ENCODE measurements at regions of chr15 and their contacts with region 1.

Region 1: DNA sequence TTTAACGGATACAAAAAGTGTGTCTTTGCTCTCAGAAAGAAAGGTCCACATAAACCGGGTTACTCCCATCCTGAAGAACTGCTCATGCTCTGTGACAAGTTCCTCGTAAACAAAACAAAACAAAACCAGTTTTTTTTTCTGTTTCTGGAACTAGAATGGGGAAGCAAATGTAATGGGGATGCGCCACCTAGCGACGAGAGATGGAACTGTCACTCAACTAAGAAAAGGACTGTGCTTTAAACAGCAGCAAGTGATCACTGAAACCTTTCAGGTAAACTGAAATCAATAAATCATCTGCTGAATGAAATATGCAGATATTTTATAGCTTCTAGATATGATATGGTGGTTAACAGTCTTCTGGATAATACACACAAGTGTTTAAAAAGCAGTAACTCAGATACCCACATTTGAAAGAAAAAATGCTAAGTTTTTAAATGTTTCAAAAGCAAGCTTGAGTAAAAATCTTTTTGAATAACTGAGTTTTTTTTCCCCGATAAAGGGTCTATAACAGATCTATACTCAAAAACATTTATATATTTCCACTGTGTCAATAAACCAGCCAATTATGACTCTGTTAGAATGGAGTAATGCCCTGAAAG is 10.9 kb downstream of the TM2D3 start:
- DNase-seq: peak; percentile 82
- H3K4me3 ChIP-seq: no peak overlapping the region
- H3K27ac ChIP-seq: peak overlapping the region; percentile 93
- H3K4me1 ChIP-seq: peaks cover 23% of the 10 kb centered on the region
- H3K27me3 ChIP-seq: no peaks in the 10 kb centered on the region
- CTCF ChIP-seq: peak; percentile 81 to 82
- POLR2A ChIP-seq: no peak

Region 2: DNA sequence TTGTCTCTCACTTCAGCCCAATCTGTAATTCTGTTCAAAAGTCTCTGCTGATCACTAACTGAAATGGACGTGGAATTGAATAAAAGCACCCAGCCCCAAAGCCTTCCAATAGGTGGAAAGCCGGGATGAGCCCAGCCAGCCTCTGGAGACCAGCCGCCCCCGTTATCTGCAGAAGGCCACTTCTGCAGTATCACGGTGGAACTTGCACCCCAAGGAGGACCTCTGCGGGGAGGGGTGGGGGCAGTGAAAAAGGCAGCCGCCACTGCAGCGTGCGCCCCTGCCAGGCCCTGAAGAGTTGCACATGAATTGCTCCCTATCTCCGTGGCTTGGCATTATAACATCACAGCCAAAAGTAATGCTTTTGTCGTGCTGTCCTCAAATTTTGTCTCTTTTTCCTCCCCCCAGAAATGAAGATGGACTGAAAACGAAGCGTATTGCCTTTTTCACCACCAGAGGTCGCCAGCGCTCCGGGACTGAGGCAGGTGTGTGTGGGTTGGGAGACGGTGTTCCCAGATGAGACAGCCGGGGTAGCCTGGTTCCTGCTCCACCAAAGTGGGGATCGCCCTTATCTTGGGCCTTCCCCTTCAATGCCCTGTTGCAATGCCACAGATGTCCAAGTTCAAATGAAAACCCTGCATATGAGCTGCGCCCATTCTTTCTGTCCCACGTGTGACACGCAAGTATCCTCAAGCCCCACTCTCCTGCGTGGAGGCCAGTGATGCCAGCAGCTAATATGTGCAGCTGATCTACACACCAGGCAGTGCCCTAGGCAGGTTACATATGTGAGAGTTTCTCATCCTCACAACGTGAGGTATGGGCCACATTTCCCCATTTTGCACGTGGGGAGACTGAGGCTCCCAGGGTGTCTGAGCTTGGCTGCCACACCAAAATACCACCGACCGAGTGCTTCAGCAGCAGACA is 626.1 kb before region 1 on chr15:
- CTCF ChIA-PET with region 1: no interaction called
- POLR2A ChIA-PET with region 1: no interaction called
- dilution Hi-C with region 1: no loop called
- intact Hi-C with region 1: loop called (anchors 1 kb)
- DNase-seq: peak; percentile 59
- H3K4me3 ChIP-seq: no peak overlapping the region
- H3K27ac ChIP-seq: no peak overlapping the region
- H3K4me1 ChIP-seq: no peaks in the 10 kb centered on the region
- H3K27me3 ChIP-seq: no peaks in the 10 kb centered on the region
- CTCF ChIP-seq: peak; percentile 83 to 90
- POLR2A ChIP-seq: no peak

Region 3: GRCh38 chr15:101288908-101289513 is 352.3 kb before region 1 on chr15:
- CTCF ChIA-PET with region 1: interaction called, 49 read pairs
- POLR2A ChIA-PET with region 1: no interaction called
- dilution Hi-C with region 1: no loop called
- intact Hi-C with region 1: loop called (anchors 1 kb)
- DNase-seq: peak; percentile 28
- H3K4me3 ChIP-seq: no peak overlapping the region
- H3K27ac ChIP-seq: no peak overlapping the region
- H3K4me1 ChIP-seq: peaks cover 9% of the 10 kb centered on the region
- H3K27me3 ChIP-seq: no peaks in the 10 kb centered on the region
- CTCF ChIP-seq: peak; percentile 46 to 57
- POLR2A ChIP-seq: no peak

Region 4: GRCh38 chr15:101305820-101306255 is 335.4 kb before region 1 on chr15:
- CTCF ChIA-PET with region 1: interaction called, 82 read pairs
- POLR2A ChIA-PET with region 1: no interaction called
- dilution Hi-C with region 1: no loop called
- intact Hi-C with region 1: no loop called
- DNase-seq: no peak
- H3K4me3 ChIP-seq: no peak overlapping the region
- H3K27ac ChIP-seq: no peak overlapping the region
- H3K4me1 ChIP-seq: no peaks in the 10 kb centered on the region
- H3K27me3 ChIP-seq: no peaks in the 10 kb centered on the region
- CTCF ChIP-seq: no peak
- POLR2A ChIP-seq: no peak

Region 5: GRCh38 chr15:101445562-101446517 is 195.4 kb before region 1 on chr15:
- CTCF ChIA-PET with region 1: interaction called, 4 read pairs
- POLR2A ChIA-PET with region 1: no interaction called
- dilution Hi-C with region 1: no loop called
- intact Hi-C with region 1: loop called (anchors 1 kb)
- DNase-seq: peak; percentile 92
- H3K4me3 ChIP-seq: no peak overlapping the region
- H3K27ac ChIP-seq: peak overlapping the region; percentile 87
- H3K4me1 ChIP-seq: peaks cover 18% of the 10 kb centered on the region
- H3K27me3 ChIP-seq: peaks cover 0 to 5% of the 10 kb centered on the region in 2 experiments
- CTCF ChIP-seq: no peak
- POLR2A ChIP-seq: peak; percentile 47

Region 6: GRCh38 chr15:101540480-101541239 is 100.6 kb before region 1 on chr15:
- CTCF ChIA-PET with region 1: interaction called, 14 read pairs
- POLR2A ChIA-PET with region 1: no interaction called
- dilution Hi-C with region 1: no loop called
- intact Hi-C with region 1: loop called (anchors 1 kb)
- DNase-seq: no peak
- H3K4me3 ChIP-seq: no peak overlapping the region
- H3K27ac ChIP-seq: no peak overlapping the region
- H3K4me1 ChIP-seq: no peaks in the 10 kb centered on the region
- H3K27me3 ChIP-seq: no peaks in the 10 kb centered on the region
- CTCF ChIP-seq: no peak
- POLR2A ChIP-seq: no peak

Region 7: DNA sequence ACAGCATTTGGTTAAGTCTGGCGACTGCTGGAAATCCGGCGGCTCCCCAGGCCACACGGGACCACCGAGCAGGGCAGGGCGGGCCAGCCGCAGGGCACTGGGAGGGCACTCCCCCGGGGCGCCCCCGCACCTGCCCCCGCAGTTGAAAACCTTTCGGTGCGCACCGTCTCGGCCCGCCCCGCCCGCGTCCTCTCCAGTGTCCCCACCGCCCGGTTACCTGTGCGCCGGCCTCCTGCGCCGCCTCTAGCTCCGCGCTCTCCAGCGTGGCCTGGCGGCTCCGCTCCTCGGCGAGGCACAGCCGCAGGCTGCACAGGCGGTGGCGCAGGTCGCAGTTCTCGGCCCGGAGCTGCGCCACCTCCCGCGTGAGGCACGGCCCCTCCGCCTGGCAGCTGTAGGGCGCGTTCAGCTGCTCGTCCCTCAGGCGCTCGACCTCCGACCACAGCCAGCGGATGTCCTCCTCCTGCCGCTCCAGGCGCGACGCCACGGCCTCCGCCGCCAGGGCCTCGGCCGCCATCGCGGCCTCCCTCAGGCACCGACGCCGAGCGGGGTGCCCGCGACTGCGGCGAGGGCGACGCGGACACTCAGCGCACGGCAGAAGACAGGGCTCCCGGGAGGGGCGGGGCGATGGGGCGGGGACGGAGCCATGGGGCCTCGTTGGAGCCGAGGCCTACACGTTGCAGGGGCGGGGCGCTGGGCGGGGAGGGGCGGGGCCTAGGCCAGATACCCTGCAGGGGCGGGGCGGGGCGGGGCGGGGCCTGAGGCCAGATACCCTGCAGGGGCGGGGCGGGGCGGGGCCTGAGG is 82.8 kb after region 1 on chr15 and contains the start of gene TARS3:
- CTCF ChIA-PET with region 1: interaction called, 5 read pairs
- POLR2A ChIA-PET with region 1: no interaction called
- dilution Hi-C with region 1: no loop called
- intact Hi-C with region 1: loop called (anchors 1 kb)
- DNase-seq: peak; percentile 90
- H3K4me3 ChIP-seq: peak within 1 kb of the TSS; percentile 65 to 91 (median 77)
- H3K27ac ChIP-seq: peak within 1 kb of the TSS; percentile 58
- H3K4me1 ChIP-seq: peaks cover 5% of the 10 kb centered on the region
- H3K27me3 ChIP-seq: no peaks in the 10 kb centered on the region
- CTCF ChIP-seq: no peak
- POLR2A ChIP-seq: peak; percentile 86
- total RNA-seq, gene TARS3: 7.7 and 8.2 TPM in 2 replicates